ENCODE measurements at regions of chr16 and their contacts with region 1.

Region 1: GRCh38 chr16:82031116-82032084 is 3.7 kb upstream of the HSD17B2 start:
- DNase-seq: no peak
- ATAC-seq: peak; percentile 65
- H3K4me3 ChIP-seq: no peak overlapping the region
- H3K27ac ChIP-seq: no peak overlapping the region
- H3K4me1 ChIP-seq: peaks cover 9% of the 10 kb centered on the region
- H3K27me3 ChIP-seq: no peaks in the 10 kb centered on the region
- CTCF ChIP-seq: peak; percentile 59

Region 2: DNA sequence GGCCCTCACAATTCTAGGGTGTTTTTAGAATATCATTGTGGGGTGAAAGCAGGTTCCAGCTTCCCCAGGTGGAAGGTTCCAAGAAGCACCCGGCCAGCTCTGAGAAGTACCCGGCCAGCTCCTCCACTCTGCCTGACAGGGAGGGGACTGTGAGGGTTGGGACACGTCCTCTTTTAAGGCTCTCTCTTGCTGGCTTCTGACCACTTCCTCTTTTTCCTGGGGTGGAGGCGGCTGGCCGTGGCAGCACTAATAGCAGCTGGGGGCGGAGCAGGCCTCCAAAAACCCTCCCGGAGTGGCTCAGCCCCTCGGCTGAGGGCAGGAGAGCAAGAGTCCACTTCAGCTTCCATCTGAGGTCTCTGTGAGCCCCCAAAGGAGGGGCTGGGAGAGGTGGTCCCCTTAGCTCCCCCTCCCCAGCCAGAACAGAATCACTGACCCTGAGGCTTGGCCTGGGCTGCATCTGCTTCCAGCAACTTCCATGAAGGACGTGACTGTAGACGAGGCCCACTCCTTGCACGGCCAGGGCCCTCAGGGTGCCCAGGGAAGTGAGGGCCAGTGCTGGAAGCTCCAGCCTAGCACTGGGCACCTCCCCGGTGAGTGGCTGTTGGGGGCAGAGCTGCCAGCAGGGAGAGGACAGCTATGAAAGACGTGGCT is 279.1 kb before region 1 on chr16:
- intact Hi-C with region 1: no loop called
- DNase-seq: peak; percentile 84
- ATAC-seq: peak; percentile 97
- H3K4me3 ChIP-seq: no peak overlapping the region
- H3K27ac ChIP-seq: peak overlapping the region; percentile 66
- H3K4me1 ChIP-seq: peaks cover 7% of the 10 kb centered on the region
- H3K27me3 ChIP-seq: no peaks in the 10 kb centered on the region
- CTCF ChIP-seq: no peak

Region 3: DNA sequence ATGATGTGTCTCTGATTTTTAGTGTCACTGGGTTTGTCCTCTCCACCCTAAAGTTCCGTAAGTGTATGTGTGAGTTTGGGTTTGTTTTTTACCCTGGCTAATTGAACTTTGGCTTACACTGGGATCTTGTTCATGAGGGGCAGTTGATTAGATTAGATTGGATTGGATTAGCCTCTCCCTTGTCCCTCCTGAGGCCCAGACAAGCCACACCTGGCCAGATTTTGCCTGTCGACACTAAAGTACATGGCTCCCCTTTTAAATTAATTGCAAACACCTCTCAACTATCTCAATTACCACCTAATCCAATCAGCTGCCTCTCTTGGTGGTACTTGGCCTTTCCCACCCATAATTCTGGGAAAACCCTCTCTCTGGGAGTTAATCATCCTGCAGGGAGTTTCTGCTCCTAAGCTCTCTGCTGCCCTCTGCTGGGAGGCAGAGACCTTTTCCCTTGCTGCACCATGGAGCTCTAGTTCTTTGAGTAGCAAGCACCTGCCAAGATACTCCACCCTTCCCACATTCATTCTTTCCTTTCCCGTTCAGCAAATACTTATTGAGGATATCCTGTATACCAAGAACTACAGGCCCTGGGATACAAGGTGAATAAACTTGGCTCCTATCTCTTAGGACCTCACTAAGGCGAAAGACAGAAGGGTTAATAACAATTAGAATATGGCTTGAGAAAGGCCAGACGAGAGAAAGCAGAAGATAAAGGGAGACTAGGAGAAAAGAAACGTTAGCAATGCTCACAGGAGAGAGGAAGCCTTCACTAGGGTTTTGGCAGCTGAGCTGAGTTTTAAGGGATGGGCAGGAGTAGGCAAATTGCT is 198.6 kb after region 1 on chr16:
- intact Hi-C with region 1: loop called (anchors 5 kb)
- DNase-seq: peak; percentile 81
- ATAC-seq: peak; percentile 94
- H3K4me3 ChIP-seq: no peak overlapping the region
- H3K27ac ChIP-seq: no peak overlapping the region
- H3K4me1 ChIP-seq: no peaks in the 10 kb centered on the region
- H3K27me3 ChIP-seq: no peaks in the 10 kb centered on the region
- CTCF ChIP-seq: peak; percentile 94